ENCODE measurements at regions of chr1 and their contacts with region 1.

Region 1: GRCh38 chr1:179365320-179366092 is at the start of gene AXDND1:
- DNase-seq: peak; percentile 96
- H3K4me3 Mint-ChIP-seq: peak within 1 kb of the TSS; percentile 96
- H3K27ac Mint-ChIP-seq: peak within 1 kb of the TSS; percentile 97
- H3K4me1 Mint-ChIP-seq: peaks cover 9% of the 10 kb centered on the region
- H3K27me3 Mint-ChIP-seq: peaks cover 4% of the 10 kb centered on the region
- total RNA-seq, gene AXDND1: 0.21 TPM in 1 of 2 replicates, not detected in the other

Region 2: DNA sequence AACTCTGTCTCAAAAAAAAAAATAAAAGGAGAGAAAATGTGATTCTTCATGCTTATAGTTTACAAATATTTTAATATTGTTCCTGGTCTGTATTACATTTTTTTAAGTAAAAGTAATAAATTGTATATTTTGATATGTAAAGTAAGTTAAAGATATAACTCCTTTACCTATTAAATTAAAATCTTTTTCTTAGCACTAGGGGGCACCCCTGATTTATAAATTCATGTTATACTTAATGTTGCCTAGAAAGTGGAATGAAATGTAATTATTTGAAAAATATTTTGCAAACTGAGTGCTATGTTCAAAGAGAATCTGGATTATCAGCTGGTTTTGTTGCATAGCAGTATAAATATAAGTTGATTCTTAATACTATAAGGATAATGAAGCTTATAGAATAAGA is 591.2 kb before region 1 on chr1:
- intact Hi-C with region 1: loop called (anchors 5 kb)
- DNase-seq: no peak
- H3K4me3 Mint-ChIP-seq: no peak overlapping the region
- H3K27ac Mint-ChIP-seq: no peak overlapping the region
- H3K4me1 Mint-ChIP-seq: no peaks in the 10 kb centered on the region
- H3K27me3 Mint-ChIP-seq: no peaks in the 10 kb centered on the region

Region 3: GRCh38 chr1:179025125-179025974 is 340.2 kb before region 1 on chr1 and contains the start of gene FAM20B:
- intact Hi-C with region 1: loop called (anchors 5 kb)
- DNase-seq: peak; percentile 97
- H3K4me3 Mint-ChIP-seq: peak within 1 kb of the TSS; percentile 89
- H3K27ac Mint-ChIP-seq: peak within 1 kb of the TSS; percentile 86
- H3K4me1 Mint-ChIP-seq: peaks cover 37% of the 10 kb centered on the region
- H3K27me3 Mint-ChIP-seq: peaks cover 17% of the 10 kb centered on the region
- total RNA-seq, gene FAM20B: 40.4 and 45.2 TPM in 2 replicates

Region 4: GRCh38 chr1:179129702-179130473 is 235.6 kb before region 1 on chr1:
- intact Hi-C with region 1: loop called (anchors 1 kb)
- DNase-seq: peak; percentile 78
- H3K4me3 Mint-ChIP-seq: peak overlapping the region; percentile 85
- H3K27ac Mint-ChIP-seq: peak overlapping the region; percentile 97
- H3K4me1 Mint-ChIP-seq: peaks cover 26% of the 10 kb centered on the region
- H3K27me3 Mint-ChIP-seq: no peaks in the 10 kb centered on the region

Region 5: GRCh38 chr1:179251675-179252074 is 113.8 kb before region 1 on chr1:
- intact Hi-C with region 1: loop called (anchors 2 kb)
- DNase-seq: no peak
- H3K4me3 Mint-ChIP-seq: no peak overlapping the region
- H3K27ac Mint-ChIP-seq: no peak overlapping the region
- H3K4me1 Mint-ChIP-seq: no peaks in the 10 kb centered on the region
- H3K27me3 Mint-ChIP-seq: no peaks in the 10 kb centered on the region

Region 6: GRCh38 chr1:179287456-179287855 is 78.0 kb before region 1 on chr1:
- intact Hi-C with region 1: no loop called
- DNase-seq: no peak
- H3K4me3 Mint-ChIP-seq: no peak overlapping the region
- H3K27ac Mint-ChIP-seq: no peak overlapping the region
- H3K4me1 Mint-ChIP-seq: no peaks in the 10 kb centered on the region
- H3K27me3 Mint-ChIP-seq: no peaks in the 10 kb centered on the region

Region 7: GRCh38 chr1:179380299-179380698 is 14.8 kb after region 1 on chr1:
- intact Hi-C with region 1: no loop called
- DNase-seq: no peak
- H3K4me3 Mint-ChIP-seq: no peak overlapping the region
- H3K27ac Mint-ChIP-seq: no peak overlapping the region
- H3K4me1 Mint-ChIP-seq: no peaks in the 10 kb centered on the region
- H3K27me3 Mint-ChIP-seq: no peaks in the 10 kb centered on the region

Region 8: DNA sequence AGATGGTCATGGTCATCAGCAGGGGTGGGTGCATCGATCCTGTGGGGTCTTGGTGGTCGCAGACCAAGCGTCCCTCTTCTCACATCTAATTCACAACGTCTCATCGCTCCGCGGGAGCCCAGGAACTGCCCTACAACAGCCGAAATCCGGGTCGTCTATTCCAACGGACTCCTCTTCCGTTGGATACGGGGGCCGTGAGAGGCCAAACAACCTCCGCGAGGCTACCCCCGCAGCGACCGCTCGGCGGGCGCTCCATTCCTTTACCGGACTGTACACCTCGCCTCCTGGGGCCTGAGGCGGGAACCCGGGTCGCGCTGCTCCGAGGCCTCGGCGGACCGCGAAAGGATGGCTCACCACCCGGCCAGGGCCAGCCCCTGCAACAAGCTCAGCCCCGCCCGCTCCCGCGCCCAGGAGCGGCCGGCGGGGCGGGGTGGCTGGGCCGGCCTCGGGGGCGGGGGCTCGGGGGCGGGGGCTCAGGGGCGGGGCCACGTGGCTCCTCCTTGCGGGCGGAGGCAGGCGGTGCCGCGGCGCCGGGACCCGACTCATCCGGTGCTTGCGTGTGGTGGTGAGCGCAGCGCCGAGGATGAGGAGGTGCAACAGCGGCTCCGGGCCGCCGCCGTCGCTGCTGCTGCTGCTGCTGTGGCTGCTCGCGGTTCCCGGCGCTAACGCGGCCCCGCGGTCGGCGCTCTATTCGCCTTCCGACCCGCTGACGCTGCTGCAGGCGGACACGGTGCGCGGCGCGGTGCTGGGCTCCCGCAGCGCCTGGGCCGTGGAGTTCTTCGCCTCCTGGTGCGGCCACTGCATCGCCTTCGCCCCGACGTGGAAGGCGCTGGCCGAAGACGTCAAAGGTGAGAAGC is 789.0 kb after region 1 on chr1 and contains the start of gene QSOX1:
- intact Hi-C with region 1: loop called (anchors 10 kb)
- DNase-seq: peak; percentile 96
- H3K4me3 Mint-ChIP-seq: peak within 1 kb of the TSS; percentile 95
- H3K27ac Mint-ChIP-seq: peak within 1 kb of the TSS; percentile 93
- H3K4me1 Mint-ChIP-seq: peaks cover 29% of the 10 kb centered on the region
- H3K27me3 Mint-ChIP-seq: no peaks in the 10 kb centered on the region
- total RNA-seq, gene QSOX1: 54.2 and 56.2 TPM in 2 replicates